CD4-positive, alpha-beta memory T cell (primary cell): ENCODE measurements at regions of chr6 and their contacts with region 1.

Region 1: GRCh38 chr6:158213925-158214674 is 46.0 kb downstream of the GTF2H5 start:
- DNase-seq: peak; percentile 42 to 58 (median 55)
- H3K4me3 ChIP-seq: no peak overlapping the region
- H3K4me3 Mint-ChIP-seq: no peak overlapping the region
- H3K27ac ChIP-seq: no peak overlapping the region
- H3K27ac Mint-ChIP-seq: peak overlapping the region in 1 of 7 donors; percentile 49
- H3K4me1 ChIP-seq: no peaks in the 10 kb centered on the region
- H3K4me1 Mint-ChIP-seq: peaks cover 0 to 4% (median 1%) of the 10 kb centered on the region in 4 donors
- H3K27me3 ChIP-seq: no peaks in the 10 kb centered on the region
- H3K27me3 Mint-ChIP-seq: peaks cover 0 to 3% of the 10 kb centered on the region in 2 donors

Region 2: GRCh38 chr6:158387036-158387435 is 172.9 kb after region 1 on chr6:
- CTCF ChIA-PET with region 1: interaction called, 19 read pairs
- POLR2A ChIA-PET with region 1: no interaction called
- intact Hi-C with region 1: no loop called
- DNase-seq: peak in 4 of 5 donors; percentile 3 to 30 (median 8)
- H3K4me3 ChIP-seq: no peak overlapping the region
- H3K4me3 Mint-ChIP-seq: no peak overlapping the region
- H3K27ac ChIP-seq: no peak overlapping the region
- H3K27ac Mint-ChIP-seq: no peak overlapping the region
- H3K4me1 ChIP-seq: no peaks in the 10 kb centered on the region
- H3K4me1 Mint-ChIP-seq: peaks cover 0 to 12% (median 6%) of the 10 kb centered on the region in 4 donors
- H3K27me3 ChIP-seq: no peaks in the 10 kb centered on the region
- H3K27me3 Mint-ChIP-seq: no peaks in the 10 kb centered on the region

Region 3: GRCh38 chr6:158518191-158519127 is 304.4 kb after region 1 on chr6:
- CTCF ChIA-PET with region 1: interaction called, 11 read pairs
- POLR2A ChIA-PET with region 1: no interaction called
- intact Hi-C with region 1: no loop called
- DNase-seq: peak; percentile 57 to 68 (median 64)
- H3K4me3 ChIP-seq: peak overlapping the region; percentile 20 to 51
- H3K4me3 Mint-ChIP-seq: peak overlapping the region; percentile 79 to 90 (median 86)
- H3K27ac ChIP-seq: no peak overlapping the region
- H3K27ac Mint-ChIP-seq: peak overlapping the region; percentile 62 to 93 (median 80)
- H3K4me1 ChIP-seq: peaks cover 33% of the 10 kb centered on the region
- H3K4me1 Mint-ChIP-seq: peaks cover 22 to 41% (median 31%) of the 10 kb centered on the region in 4 donors
- H3K27me3 ChIP-seq: no peaks in the 10 kb centered on the region
- H3K27me3 Mint-ChIP-seq: peaks cover 2 to 6% of the 10 kb centered on the region in 2 donors

Region 4: DNA sequence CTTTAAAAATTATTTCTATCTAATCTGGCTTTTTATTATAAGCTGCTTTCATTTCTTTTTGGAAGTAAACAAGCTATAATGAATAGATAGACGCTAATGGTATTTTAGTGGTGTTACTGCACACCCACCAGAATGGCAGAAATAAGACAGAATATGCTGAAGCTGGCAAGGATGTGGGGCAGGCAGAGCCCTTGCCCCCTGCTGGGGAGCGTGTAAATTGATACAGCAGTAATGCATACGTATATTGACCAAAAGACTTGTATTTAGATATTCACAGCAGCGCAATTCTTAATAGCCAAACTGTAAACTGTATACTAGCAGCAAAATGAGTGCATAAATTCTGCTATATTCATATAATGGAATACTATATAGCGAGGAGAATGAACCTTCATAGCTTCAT is 381.1 kb after region 1 on chr6:
- CTCF ChIA-PET with region 1: interaction called, 17 read pairs
- POLR2A ChIA-PET with region 1: no interaction called
- intact Hi-C with region 1: no loop called
- DNase-seq: peak in 4 of 5 donors; percentile 12 to 26 (median 21)
- H3K4me3 ChIP-seq: no peak overlapping the region
- H3K4me3 Mint-ChIP-seq: no peak overlapping the region
- H3K27ac ChIP-seq: no peak overlapping the region
- H3K27ac Mint-ChIP-seq: peak overlapping the region in 1 of 7 donors; percentile 52
- H3K4me1 ChIP-seq: no peaks in the 10 kb centered on the region
- H3K4me1 Mint-ChIP-seq: peaks cover 0 to 12% (median 2%) of the 10 kb centered on the region in 4 donors
- H3K27me3 ChIP-seq: no peaks in the 10 kb centered on the region
- H3K27me3 Mint-ChIP-seq: no peaks in the 10 kb centered on the region

Region 5: DNA sequence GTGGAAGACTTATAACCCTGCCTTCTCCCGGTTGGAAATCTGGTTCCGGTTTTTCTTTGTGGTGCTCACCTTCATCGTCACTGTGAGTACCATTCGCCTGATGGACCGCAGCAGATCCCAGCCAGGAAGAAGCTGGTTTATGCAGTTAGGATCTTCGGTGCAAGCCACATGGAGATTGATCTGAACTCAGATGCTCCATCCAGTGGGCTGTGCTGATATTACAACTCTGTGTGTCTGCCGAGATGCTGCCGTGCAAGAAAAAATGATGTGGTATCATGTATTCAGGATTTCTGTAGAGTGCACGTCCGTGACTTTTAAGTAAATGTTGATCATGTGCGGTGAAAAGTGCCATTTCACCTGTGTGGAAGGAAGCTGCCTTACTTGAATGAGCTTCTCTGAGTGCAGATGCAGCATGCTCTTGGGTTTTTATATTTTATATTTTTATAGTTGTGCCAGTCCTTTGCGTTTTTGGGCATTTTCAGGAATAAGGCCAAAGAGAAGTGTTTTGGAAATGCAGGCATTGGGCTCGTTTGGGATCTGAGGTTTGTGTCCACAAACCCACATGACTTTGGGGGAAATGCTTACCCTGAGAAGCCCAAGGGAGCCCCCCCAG is 391.3 kb after region 1 on chr6:
- CTCF ChIA-PET with region 1: interaction called, 20 read pairs
- POLR2A ChIA-PET with region 1: interaction called, 4 read pairs
- intact Hi-C with region 1: loop called (anchors 1 kb)
- DNase-seq: peak; percentile 36 to 53 (median 51)
- H3K4me3 ChIP-seq: no peak overlapping the region
- H3K4me3 Mint-ChIP-seq: no peak overlapping the region
- H3K27ac ChIP-seq: no peak overlapping the region
- H3K27ac Mint-ChIP-seq: peak overlapping the region in 5 of 7 donors; percentile 7 to 80 (median 76)
- H3K4me1 ChIP-seq: no peaks in the 10 kb centered on the region
- H3K4me1 Mint-ChIP-seq: peaks cover 5 to 15% (median 14%) of the 10 kb centered on the region in 4 donors
- H3K27me3 ChIP-seq: no peaks in the 10 kb centered on the region
- H3K27me3 Mint-ChIP-seq: no peaks in the 10 kb centered on the region